ENCODE measurements at regions of chr14 and their contacts with region 1.

Region 1: GRCh38 chr14:55731881-55732498 is 152.0 kb downstream of the KTN1 start:
- DNase-seq: peak; percentile 64
- ATAC-seq: no peak
- H3K4me3 Mint-ChIP-seq: no peak overlapping the region
- H3K27ac Mint-ChIP-seq: no peak overlapping the region
- H3K4me1 Mint-ChIP-seq: no peaks in the 10 kb centered on the region
- H3K27me3 Mint-ChIP-seq: peaks cover 7% of the 10 kb centered on the region

Region 2: DNA sequence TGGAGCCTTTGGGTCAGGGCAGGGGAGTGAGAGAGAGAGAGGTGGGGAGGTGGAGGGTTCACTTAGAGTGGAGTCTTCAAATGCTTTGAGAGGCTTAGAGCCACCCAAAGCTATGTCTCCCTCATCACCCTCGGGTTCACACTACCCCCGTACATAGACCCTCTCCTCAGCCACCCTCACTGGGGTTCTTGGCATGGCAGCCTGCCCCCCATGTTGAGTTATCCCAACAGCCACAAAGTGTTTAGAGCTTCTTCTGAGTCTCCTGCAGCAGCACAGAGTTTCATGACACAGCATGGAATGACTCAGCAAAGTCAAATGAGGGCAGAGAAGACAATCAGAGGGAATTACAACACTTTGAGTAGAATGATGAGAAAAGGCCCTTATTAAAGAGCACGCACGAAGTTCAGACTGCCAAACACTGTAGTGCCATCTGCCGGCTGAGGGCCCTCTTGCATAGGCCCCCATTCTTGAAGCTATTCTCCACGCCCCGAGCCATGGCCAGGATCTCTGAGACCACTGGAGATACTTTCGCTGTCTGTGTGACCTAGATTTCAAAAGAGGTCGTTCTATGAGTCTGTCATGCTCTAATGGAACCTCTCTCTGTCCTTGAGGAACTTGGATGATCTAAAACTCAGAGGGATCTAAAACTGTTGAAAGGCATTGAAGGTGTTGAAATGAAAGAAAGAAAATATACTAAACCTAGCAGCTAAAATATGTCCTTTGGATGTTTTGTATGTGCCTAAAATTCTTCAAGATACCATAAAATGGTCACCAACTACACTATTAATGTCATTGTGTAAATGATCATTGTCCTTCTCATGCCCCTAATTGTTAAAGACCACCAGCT is 608.1 kb after region 1 on chr14:
- CTCF ChIA-PET with region 1: interaction called, 39 read pairs
- POLR2A ChIA-PET with region 1: no interaction called
- DNase-seq: peak; percentile 68
- ATAC-seq: peak; percentile 81
- H3K4me3 Mint-ChIP-seq: no peak overlapping the region
- H3K27ac Mint-ChIP-seq: no peak overlapping the region
- H3K4me1 Mint-ChIP-seq: peaks cover 7% of the 10 kb centered on the region
- H3K27me3 Mint-ChIP-seq: no peaks in the 10 kb centered on the region

Region 3: DNA sequence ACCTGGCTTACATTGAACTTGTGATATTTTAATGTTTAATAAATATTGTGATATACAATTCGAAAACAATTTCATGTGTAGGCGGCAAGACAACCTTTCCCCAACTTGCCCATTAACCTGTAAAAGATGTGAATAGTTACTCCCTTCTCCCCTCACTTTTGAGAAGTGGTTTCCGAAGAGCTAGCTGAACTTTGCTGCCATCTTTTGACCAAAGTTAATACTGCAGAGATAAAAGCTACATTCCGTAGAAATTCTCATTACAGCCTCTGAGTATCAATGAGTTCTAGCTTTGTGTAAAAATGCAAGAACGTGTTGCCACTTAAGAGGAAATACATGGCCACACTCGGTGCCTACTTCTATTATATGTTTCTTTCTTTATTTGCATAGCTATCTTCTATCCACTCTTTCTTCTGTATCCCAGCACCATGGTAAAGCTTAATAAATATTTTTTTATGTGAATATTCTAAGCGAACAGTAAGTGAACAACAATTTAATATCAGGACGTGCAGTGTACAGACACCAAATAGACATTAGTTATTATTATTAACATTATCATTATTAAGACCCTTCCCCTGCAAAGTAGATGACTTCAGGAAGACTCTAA is 742.5 kb after region 1 on chr14:
- CTCF ChIA-PET with region 1: interaction called, 21 read pairs
- POLR2A ChIA-PET with region 1: no interaction called
- DNase-seq: peak; percentile 23
- ATAC-seq: no peak
- H3K4me3 Mint-ChIP-seq: no peak overlapping the region
- H3K27ac Mint-ChIP-seq: no peak overlapping the region
- H3K4me1 Mint-ChIP-seq: no peaks in the 10 kb centered on the region
- H3K27me3 Mint-ChIP-seq: peaks cover 16% of the 10 kb centered on the region